ENCODE measurements at regions of chr6 and their contacts with region 1.

Region 1: DNA sequence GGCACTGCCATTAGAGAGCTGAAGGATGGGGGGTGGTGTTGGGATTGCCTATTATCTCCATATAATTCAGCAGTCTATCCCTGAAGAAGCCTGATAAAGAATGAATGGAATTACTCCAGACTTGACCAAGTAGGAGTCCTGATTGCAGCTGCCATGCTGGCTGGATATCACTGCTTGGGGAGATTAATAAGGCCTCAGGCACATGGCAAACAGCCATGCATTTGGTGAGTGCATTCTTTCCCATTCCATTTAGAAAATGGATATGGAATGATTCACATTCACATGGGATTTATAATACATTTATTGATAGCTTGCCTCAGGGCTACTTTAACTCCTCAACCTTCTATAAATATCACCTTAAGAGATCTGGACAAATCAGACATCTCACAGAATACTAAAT is 49.6 kb upstream of the HLA-A start:
- DNase-seq: no peak
- H3K4me3 Mint-ChIP-seq: no peak overlapping the region
- H3K27ac Mint-ChIP-seq: no peak overlapping the region
- H3K4me1 Mint-ChIP-seq: no peaks in the 10 kb centered on the region
- H3K27me3 Mint-ChIP-seq: no peaks in the 10 kb centered on the region
- CTCF ChIP-seq: no peak

Region 2: GRCh38 chr6:29752451-29753308 is 140.0 kb before region 1 on chr6:
- CTCF ChIA-PET with region 1: no interaction called
- POLR2A ChIA-PET with region 1: no interaction called
- intact Hi-C with region 1: no loop called
- DNase-seq: peak; percentile 92
- H3K4me3 Mint-ChIP-seq: peak overlapping the region; percentile 89
- H3K27ac Mint-ChIP-seq: peak overlapping the region; percentile 85
- H3K4me1 Mint-ChIP-seq: peaks cover 32% of the 10 kb centered on the region
- H3K27me3 Mint-ChIP-seq: no peaks in the 10 kb centered on the region
- CTCF ChIP-seq: peak; percentile 94

Region 3: GRCh38 chr6:29909985-29910384 is 17.3 kb after region 1 on chr6:
- CTCF ChIA-PET with region 1: no interaction called
- POLR2A ChIA-PET with region 1: no interaction called
- intact Hi-C with region 1: no loop called
- DNase-seq: peak; percentile 20
- H3K4me3 Mint-ChIP-seq: no peak overlapping the region
- H3K27ac Mint-ChIP-seq: no peak overlapping the region
- H3K4me1 Mint-ChIP-seq: no peaks in the 10 kb centered on the region
- H3K27me3 Mint-ChIP-seq: peaks cover 48% of the 10 kb centered on the region
- CTCF ChIP-seq: no peak

Region 4: GRCh38 chr6:29953001-29953441 is 60.3 kb after region 1 on chr6:
- CTCF ChIA-PET with region 1: no interaction called
- POLR2A ChIA-PET with region 1: no interaction called
- intact Hi-C with region 1: loop called (anchors 2 kb)
- DNase-seq: peak; percentile 66
- H3K4me3 Mint-ChIP-seq: no peak overlapping the region
- H3K27ac Mint-ChIP-seq: no peak overlapping the region
- H3K4me1 Mint-ChIP-seq: peaks cover 5% of the 10 kb centered on the region
- H3K27me3 Mint-ChIP-seq: no peaks in the 10 kb centered on the region
- CTCF ChIP-seq: no peak

Measured in MCF 10A (cell line).